ENCODE measurements at regions of chr5 and their contacts with region 1.

Region 1: GRCh38 chr5:130541617-130542221 is 623.3 kb downstream of the HINT1 start:
- DNase-seq: peak; percentile 84
- H3K4me3 ChIP-seq: no peak overlapping the region
- H3K27ac ChIP-seq: peak overlapping the region; percentile 63
- H3K4me1 ChIP-seq: peaks cover 35% of the 10 kb centered on the region
- H3K27me3 ChIP-seq: no peaks in the 10 kb centered on the region
- CTCF ChIP-seq: no peak

Region 2: DNA sequence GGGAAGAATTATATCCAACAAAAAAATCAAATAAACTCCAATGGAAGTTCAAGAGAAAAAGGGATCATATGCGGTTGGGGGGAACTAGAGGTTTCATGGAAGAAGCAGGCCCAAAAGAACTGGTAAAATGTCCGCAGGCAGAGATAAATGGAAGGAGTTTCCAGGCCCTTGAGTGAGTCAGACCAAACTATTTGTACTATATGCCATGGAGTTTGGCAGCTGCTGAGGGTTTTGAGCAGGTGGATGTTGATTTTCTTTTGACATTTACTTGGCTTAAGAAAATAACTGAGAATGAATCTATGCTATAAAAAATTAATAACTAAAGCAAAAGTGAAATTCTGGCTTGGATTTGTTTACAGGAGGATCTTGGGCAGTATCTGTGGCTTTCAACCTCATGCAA is 760.1 kb before region 1 on chr5:
- CTCF ChIA-PET with region 1: no interaction called
- dilution Hi-C with region 1: no loop called
- in situ Hi-C with region 1: no loop called
- intact Hi-C with region 1: loop called (anchors 10 kb)
- DNase-seq: no peak
- H3K4me3 ChIP-seq: no peak overlapping the region
- H3K27ac ChIP-seq: no peak overlapping the region
- H3K4me1 ChIP-seq: no peaks in the 10 kb centered on the region
- H3K27me3 ChIP-seq: no peaks in the 10 kb centered on the region
- CTCF ChIP-seq: no peak

Region 3: DNA sequence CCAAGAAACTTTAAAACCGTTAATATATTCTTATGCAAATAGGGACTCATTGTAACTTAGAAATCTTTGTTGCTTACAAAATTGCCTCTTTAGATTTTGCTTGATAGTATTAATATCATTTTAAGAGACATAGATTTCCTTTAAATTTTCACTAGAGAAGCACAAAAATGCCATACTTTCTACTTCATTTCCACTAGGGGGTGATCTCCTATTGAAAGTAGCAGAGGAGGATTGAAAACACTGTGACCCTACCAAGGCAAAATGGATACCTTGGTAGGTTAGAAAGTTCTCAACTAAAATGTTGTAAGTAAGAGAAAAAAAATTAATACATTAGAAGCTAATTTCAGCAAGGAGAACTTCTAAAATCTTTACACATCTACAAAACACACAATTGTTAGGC is 432.6 kb before region 1 on chr5:
- CTCF ChIA-PET with region 1: interaction called, 6 read pairs
- dilution Hi-C with region 1: no loop called
- in situ Hi-C with region 1: no loop called
- intact Hi-C with region 1: loop called (anchors 1 kb)
- DNase-seq: peak; percentile 30
- H3K4me3 ChIP-seq: no peak overlapping the region
- H3K27ac ChIP-seq: no peak overlapping the region
- H3K4me1 ChIP-seq: no peaks in the 10 kb centered on the region
- H3K27me3 ChIP-seq: no peaks in the 10 kb centered on the region
- CTCF ChIP-seq: peak; percentile 48 to 70

Region 4: DNA sequence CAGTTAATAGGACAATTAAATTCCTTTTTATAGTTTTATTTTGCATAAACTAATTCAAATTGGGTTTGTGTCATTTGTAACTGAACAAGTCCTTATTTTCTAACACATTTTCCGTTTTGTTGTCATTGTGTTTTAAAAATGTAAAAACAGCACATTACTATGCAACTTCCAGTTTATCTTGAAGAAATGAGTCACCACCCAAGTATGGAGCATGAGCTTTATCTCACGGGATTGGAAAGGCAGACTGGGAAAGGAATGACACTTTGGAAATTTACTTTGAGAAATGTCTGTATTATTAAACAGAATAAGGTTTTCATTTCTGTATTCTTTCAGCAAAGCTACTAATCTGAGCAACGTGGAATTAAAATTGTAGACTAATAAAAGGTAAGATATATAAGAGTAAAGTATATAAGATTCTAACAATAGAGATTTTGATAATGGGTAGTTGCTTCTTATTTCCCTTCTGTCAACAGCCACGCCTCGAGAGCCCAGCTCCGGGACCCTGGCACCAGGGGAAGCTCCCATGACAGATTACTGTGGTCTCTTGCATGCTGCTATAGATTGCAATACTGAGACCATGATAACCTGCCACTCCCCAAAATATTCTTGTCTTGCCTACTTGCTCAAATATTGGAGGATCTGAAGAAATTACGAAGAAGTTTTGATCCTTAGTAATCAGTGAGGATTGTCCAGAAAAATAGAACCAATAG is 204.4 kb before region 1 on chr5:
- CTCF ChIA-PET with region 1: no interaction called
- dilution Hi-C with region 1: no loop called
- in situ Hi-C with region 1: no loop called
- intact Hi-C with region 1: loop called (anchors 10 kb)
- DNase-seq: peak; percentile 27
- H3K4me3 ChIP-seq: no peak overlapping the region
- H3K27ac ChIP-seq: no peak overlapping the region
- H3K4me1 ChIP-seq: peaks cover 25% of the 10 kb centered on the region
- H3K27me3 ChIP-seq: no peaks in the 10 kb centered on the region
- CTCF ChIP-seq: no peak

Region 5: DNA sequence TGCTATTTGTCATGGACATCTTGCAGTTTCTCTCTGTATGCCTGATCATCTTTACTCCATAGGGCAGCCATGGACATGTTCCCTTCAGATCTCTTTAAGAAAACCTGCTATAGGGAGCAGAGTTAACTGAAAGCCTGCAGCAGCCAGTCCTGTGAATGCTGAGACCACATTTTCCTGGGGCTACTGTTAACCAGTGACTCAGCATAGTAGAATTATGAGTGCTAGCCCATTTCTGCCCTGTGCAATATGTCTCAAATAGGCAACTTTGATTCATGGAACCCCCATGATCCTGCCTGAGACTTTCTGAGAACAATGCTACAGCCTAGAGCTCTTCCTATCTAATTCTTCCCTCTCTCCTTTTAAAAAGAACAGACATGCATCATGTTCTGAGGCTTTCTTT is 13.2 kb before region 1 on chr5:
- CTCF ChIA-PET with region 1: no interaction called
- dilution Hi-C with region 1: no loop called
- in situ Hi-C with region 1: no loop called
- intact Hi-C with region 1: loop called (anchors 2 kb)
- DNase-seq: peak; percentile 94
- H3K4me3 ChIP-seq: no peak overlapping the region
- H3K27ac ChIP-seq: peak overlapping the region; percentile 100
- H3K4me1 ChIP-seq: peaks cover 40% of the 10 kb centered on the region
- H3K27me3 ChIP-seq: no peaks in the 10 kb centered on the region
- CTCF ChIP-seq: no peak

Region 6: DNA sequence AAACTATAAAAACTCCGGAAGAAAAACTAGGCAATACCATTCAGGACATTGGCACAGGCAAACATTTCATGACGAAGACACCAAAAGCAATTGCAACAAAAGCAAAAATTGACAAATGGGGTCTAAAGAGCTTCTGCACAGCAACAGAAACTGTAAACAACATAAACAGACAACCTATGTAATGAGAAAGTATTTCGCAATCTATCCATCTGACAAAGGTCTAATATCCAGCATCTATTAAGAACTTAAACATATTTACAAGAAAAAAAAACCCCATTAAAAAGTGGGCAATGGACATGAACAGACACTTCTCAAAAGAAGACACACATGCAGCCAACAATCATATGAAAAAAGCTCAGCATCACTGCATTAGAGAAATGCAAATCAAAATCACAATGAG is 124.7 kb after region 1 on chr5:
- CTCF ChIA-PET with region 1: no interaction called
- dilution Hi-C with region 1: no loop called
- in situ Hi-C with region 1: no loop called
- intact Hi-C with region 1: no loop called
- DNase-seq: no peak
- H3K4me3 ChIP-seq: no peak overlapping the region
- H3K27ac ChIP-seq: no peak overlapping the region
- H3K4me1 ChIP-seq: no peaks in the 10 kb centered on the region
- H3K27me3 ChIP-seq: no peaks in the 10 kb centered on the region
- CTCF ChIP-seq: no peak

Measured in mammary epithelial cell (primary cell).